HepG2 (cell line): ENCODE measurements at regions of chr1 and their contacts with region 1.

Region 1: DNA sequence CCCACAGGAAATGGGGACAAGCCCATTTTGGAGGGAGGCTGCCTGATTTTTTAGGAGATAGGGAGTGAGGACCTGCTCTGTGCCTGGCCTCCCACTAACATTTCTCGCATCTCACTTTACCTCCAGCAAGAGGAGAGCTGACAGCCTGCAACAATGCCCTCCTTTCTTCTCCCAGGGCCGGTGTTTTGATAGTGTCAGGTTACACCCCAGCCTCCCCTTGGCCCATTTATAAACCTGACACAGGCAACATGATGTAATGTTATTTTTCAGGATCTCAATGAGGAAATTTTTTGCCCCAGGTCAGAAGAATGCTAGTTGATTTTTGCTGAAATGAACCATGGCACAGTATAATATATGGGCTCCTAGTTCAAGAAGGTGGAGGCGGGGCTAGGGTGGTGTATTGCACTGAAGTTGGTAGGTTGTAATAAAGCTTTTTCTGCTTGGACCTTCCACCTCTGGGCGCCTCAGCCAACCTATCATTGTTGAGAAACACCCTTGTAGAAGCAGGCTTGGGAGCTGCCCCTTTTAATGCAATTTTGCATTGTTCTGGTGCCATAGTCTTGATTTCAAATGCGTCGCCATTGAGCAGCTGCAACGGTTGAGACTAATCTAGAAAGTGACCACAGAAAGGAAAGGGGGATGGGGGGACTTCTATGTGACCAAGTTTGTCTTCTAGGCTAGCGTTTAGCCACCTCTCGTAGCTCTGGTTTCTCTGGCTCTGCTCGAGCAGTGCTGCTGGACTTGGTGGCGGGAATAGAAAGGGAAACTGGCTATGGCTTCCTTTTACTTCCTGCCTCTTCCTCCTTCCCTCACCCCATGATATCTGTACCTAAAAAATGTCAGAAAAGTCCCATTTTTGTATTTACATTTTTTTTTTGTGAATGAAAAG is 53.0 kb downstream of the PBX1 start:
- DNase-seq: peak; percentile 90
- ATAC-seq: peak; percentile 99
- H3K4me3 ChIP-seq: peak overlapping the region; percentile 5 to 53 (median 15); a peak in 3 of 6 replicates
- H3K27ac ChIP-seq: peak overlapping the region; percentile 31
- H3K4me1 ChIP-seq: peaks cover 32% of the 10 kb centered on the region
- H3K27me3 ChIP-seq: no peaks in the 10 kb centered on the region
- CTCF ChIP-seq: no peak
- EP300 ChIP-seq: peak in 1 of 2 experiments; percentile 45; a peak in 1 of 4 replicates
- POLR2A ChIP-seq: no peak
- RAD21 ChIP-seq: no peak

Region 2: DNA sequence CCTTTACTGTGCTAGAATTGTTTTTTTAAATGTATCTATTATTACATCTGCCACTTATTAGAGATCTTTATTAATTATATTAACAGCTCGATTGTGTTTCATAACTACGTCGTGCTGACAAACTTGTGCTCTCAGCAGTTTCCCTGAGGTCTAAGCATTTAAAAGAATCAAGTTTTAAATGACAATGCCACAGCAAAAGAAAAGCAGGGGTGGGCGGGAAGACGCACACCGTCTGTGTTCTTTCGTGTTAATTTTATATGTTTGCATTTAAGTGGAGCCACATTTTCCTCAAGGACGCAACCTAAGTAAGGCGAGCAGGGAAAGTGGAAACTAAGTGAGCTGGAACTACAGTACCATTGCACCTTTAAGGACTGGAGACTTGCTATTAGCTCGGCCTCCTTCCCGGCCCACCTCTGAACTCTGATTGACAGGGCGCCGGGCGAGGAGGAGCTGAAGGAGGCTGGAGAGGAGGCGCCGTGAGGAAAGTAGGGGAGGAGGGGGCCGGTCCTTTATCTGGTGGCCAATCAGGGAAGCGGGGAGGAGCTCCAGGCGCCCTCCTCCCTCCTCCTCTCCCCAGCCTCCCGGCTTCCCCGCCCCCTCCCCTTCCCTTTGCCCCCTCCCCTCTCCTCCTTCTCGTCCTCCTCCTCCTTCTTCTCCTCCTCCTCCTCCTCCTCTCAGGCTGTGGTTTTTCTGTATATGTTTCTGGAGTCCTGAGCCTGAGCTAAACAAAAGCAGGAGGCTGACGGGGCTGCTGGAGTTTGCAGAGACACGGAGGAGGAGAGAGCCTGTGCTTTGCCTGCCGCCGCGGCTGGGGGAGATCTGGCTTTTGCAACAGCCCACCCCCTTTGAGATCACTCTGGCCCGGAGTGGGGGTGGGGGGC is 53.3 kb before region 1 on chr1 and contains the start of gene PBX1:
- CTCF ChIA-PET with region 1: no interaction called
- POLR2A ChIA-PET with region 1: no interaction called
- in situ Hi-C with region 1: no loop called
- intact Hi-C with region 1: loop called (anchors 2 kb)
- DNase-seq: peak; percentile 64
- ATAC-seq: peak; percentile 100
- H3K4me3 ChIP-seq: peak within 1 kb of the TSS; percentile 48 to 65 (median 53)
- H3K27ac ChIP-seq: no peak within 1 kb of the TSS
- H3K4me1 ChIP-seq: 0 out of 2 replicates have a peak, but pooled peaks cover 9% of the 10 kb centered on the region
- H3K27me3 ChIP-seq: peaks cover 0 to 13% of the 10 kb centered on the region in 2 experiments; a peak in 2 of 5 replicates
- CTCF ChIP-seq: no peak
- EP300 ChIP-seq: no peak
- POLR2A ChIP-seq: no peak
- RAD21 ChIP-seq: no peak
- total RNA-seq, gene PBX1: not detected in 2 replicates

Region 3: DNA sequence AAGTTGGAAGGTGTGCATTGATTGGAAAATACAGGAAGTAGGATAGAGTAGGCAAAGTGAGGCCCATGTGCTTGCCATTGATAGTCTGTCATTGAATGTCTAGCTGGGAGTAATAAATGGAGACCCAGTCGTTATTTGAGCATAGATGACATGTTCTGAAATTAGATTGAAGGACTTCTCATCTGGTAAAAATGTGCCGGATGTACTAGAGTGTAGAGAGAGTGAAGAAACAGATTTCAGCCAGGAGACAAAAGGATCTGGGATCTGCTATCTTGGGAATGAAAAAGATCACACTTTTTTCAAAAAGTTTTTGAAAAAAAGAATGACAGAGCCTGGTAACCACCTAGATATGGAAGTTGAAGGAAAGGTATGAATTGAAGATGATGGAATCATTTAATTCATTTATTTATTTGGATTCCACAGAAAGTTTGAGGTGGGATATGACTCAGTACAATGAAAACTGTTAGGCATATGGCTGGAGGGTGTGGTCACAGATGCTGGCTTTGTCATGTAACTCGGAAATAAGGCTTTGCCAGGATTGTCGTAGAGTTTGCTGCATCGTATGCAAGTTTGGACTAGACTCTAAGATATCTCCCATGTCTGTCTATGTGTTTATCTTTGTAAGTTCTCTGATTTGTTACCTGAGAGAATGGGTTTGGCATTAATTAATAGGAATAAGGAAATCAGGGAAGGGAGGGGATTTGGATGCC is 84.1 kb after region 1 on chr1:
- CTCF ChIA-PET with region 1: no interaction called
- POLR2A ChIA-PET with region 1: no interaction called
- in situ Hi-C with region 1: no loop called
- intact Hi-C with region 1: no loop called
- DNase-seq: no peak
- ATAC-seq: no peak
- H3K4me3 ChIP-seq: no peak overlapping the region
- H3K27ac ChIP-seq: no peak overlapping the region
- H3K4me1 ChIP-seq: no peaks in the 10 kb centered on the region
- H3K27me3 ChIP-seq: no peaks in the 10 kb centered on the region
- CTCF ChIP-seq: no peak
- EP300 ChIP-seq: no peak
- POLR2A ChIP-seq: no peak
- RAD21 ChIP-seq: no peak